OCI-LY7 (cell line): ENCODE measurements at regions of chr12 and their contacts with region 1.

Region 1: DNA sequence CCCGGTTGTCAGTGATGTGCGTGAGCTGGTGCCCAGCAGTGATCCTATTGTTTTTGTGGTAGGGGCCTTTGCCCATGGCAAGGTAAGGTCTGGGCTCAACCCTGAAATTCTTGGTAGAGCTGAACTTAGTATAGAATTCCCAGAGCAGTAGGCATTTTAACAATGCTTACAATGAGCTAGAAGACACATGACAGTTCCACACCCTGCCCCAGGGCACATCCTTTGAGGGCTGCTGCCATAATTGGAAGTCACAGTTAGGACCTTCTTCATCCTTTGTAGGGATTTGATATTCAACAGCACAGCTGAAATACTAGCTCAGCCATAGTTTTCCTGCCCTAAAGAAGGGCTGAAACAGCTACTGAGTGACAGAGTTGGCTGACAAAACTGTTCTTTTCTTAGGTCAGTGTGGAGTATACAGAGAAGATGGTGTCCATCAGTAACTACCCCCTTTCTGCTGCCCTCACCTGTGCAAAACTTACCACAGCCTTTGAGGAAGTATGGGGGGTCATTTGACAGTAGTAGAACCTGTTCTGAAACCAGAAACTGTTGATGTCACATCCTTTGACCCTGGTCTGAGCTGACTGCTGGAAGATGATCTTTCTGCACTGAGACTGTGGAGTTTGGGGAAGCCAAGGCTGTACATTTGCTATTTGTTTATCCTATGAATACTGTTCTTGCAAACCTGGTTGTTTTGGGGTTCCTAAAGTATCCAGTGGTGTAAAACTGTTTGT is 4.7 kb downstream of the EMG1 start:
- DNase-seq: no peak
- H3K4me3 ChIP-seq: no peak overlapping the region
- H3K27ac ChIP-seq: peak overlapping the region; percentile 9
- H3K4me1 ChIP-seq: peaks cover 43% of the 10 kb centered on the region
- CTCF ChIP-seq: no peak

Region 2: DNA sequence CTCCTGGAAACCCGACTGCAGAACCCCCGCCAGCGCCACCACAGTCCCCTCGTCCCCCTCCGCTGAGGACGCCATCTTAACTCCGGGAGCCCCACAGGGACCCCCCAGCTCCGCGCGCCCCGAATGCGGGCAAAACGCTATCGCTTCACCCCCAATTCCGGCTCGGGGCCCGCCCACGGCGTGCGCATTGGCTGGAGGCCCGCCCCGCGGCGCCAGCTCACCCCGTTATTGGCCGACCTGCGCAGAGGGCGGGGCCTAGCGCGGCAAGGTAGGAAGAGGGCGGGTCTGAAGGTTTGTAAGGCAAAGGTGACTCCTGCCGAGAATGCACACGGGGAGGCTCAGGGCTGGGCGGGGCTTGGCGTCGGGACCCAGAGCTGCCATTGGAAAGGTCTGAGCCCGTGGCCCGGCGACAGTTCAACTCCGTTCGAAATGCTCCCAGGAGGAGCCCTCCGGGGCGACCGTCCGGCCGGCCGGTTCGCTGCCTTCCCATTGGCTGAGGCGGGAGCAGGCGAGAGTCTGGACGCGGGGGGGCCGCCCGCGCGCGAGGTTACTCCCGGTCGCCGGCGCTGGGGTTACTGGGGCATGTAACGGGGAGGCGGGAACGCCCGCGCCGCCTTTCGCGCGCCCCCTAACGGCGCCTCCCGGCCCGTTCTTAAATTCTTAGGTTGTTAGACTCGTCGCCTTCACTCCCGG is 43.0 kb after region 1 on chr12 and contains the start of gene LPCAT3:
- CTCF ChIA-PET with region 1: no interaction called
- POLR2A ChIA-PET with region 1: interaction called, 10 read pairs
- intact Hi-C with region 1: loop called (anchors 1 kb)
- DNase-seq: peak; percentile 97
- H3K4me3 ChIP-seq: peak within 1 kb of the TSS; percentile 82
- H3K27ac ChIP-seq: peak within 1 kb of the TSS; percentile 78
- H3K4me1 ChIP-seq: peaks cover 26% of the 10 kb centered on the region
- CTCF ChIP-seq: peak; percentile 83
- total RNA-seq, gene LPCAT3: 11.6 and 17.4 TPM in 2 replicates